Calu3 (cell line): ENCODE measurements at regions of chr12 and their contacts with region 1.

Region 1: DNA sequence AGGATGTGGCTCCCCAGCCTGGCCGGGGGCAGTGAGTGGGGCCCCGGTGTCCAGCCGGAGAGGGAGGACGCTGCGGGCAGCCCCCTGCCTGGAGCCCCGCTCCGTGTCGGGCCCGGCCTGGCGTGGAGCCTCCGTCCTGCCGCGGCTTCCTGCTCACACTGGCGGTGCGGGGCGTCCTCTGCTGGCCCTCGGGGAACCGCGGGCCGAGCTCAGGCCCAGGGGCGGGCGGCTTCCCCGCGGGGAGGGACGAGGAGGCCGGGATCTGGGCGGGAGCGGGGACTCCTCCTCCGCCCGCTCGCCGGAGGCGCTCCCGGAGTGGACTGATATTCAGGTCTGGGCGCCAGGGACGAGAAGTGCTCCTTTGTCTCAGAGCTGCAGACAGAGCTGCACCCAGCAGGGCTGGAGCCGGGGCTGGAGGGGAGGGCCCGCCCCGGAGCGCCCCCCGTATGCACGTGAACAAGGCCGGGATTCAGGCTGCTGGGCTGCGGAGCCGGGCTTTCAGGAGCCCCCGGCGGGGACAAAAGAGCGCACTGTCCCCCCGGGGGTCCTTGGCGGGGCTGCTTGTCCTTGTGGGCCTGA is 2.2 kb downstream of the MMP17 start:
- DNase-seq: peak; percentile 83
- H3K4me3 Mint-ChIP-seq: peak overlapping the region; percentile 68
- H3K27ac Mint-ChIP-seq: no peak overlapping the region
- H3K4me1 Mint-ChIP-seq: peaks cover 26% of the 10 kb centered on the region
- H3K27me3 Mint-ChIP-seq: peaks cover 84% of the 10 kb centered on the region
- CTCF ChIP-seq: peak; percentile 22

Region 2: DNA sequence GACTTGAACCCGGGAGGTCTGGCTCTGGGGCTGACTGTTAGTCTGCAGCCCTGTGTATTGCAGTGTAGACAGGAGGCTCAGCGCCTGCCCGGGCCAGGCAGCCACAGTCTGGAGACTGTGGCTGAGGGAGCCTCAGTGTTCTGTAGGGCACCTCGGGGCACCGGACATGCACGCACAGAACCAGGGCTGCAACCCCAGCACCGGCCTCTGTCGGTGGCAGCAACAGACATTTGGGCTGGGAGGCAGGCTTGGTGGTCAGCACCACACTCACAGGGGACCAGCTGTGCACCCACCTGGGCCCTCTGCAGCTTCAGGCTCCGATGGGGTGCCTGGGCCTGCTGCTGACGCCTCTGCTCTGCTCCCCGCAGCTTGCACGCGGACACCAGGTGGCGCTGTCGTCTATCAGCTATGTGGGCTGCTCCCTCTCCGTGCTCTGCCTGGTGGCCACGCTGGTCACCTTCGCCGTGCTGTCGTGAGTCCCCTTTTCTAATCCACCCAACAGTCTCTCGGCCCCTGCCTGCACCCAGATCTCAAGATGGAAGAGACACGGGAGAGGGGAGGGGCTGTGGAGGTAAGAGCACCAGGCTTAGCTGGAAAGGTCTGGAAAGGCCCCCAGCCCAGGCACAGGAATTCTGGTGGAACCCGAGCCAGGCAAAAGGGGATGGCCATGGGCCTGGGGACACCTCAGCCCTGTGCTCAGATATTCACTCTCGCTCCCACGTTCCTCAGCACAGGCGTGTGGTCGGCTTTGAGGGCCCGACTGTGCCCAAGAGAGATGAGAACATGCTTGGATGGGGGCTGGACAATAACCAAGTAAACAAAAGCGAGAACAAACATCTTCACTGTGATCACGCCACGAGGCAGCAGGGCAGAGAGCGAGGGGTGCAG is 725.7 kb before region 1 on chr12:
- CTCF ChIA-PET with region 1: interaction called, 8 read pairs
- intact Hi-C with region 1: loop called (anchors 10 kb)
- DNase-seq: peak; percentile 94
- H3K4me3 Mint-ChIP-seq: no peak overlapping the region
- H3K27ac Mint-ChIP-seq: no peak overlapping the region
- H3K4me1 Mint-ChIP-seq: no peaks in the 10 kb centered on the region
- H3K27me3 Mint-ChIP-seq: peaks cover 37% of the 10 kb centered on the region
- CTCF ChIP-seq: peak; percentile 92

Region 3: DNA sequence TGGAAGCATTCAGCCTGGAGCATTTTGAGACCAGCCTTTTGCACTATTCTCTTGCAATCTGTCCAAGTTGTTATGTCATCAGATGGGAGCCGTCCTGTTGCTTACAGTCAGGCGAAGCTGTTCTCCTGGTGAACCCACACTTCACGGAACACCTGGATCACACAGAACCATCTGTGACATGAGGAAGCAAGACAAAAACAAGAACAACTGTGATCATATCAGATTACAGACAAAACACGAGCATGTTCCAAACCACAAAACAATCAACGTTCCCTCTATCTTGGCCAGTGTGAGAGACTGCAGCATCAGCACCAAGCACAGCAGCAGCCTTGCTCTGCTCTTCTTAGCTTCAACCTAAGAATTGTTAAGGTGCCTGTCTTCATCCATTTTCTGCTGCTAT is 300.0 kb before region 1 on chr12:
- CTCF ChIA-PET with region 1: no interaction called
- intact Hi-C with region 1: no loop called
- DNase-seq: no peak
- H3K4me3 Mint-ChIP-seq: no peak overlapping the region
- H3K27ac Mint-ChIP-seq: no peak overlapping the region
- H3K4me1 Mint-ChIP-seq: no peaks in the 10 kb centered on the region
- H3K27me3 Mint-ChIP-seq: peaks cover 92% of the 10 kb centered on the region
- CTCF ChIP-seq: no peak

Region 4: DNA sequence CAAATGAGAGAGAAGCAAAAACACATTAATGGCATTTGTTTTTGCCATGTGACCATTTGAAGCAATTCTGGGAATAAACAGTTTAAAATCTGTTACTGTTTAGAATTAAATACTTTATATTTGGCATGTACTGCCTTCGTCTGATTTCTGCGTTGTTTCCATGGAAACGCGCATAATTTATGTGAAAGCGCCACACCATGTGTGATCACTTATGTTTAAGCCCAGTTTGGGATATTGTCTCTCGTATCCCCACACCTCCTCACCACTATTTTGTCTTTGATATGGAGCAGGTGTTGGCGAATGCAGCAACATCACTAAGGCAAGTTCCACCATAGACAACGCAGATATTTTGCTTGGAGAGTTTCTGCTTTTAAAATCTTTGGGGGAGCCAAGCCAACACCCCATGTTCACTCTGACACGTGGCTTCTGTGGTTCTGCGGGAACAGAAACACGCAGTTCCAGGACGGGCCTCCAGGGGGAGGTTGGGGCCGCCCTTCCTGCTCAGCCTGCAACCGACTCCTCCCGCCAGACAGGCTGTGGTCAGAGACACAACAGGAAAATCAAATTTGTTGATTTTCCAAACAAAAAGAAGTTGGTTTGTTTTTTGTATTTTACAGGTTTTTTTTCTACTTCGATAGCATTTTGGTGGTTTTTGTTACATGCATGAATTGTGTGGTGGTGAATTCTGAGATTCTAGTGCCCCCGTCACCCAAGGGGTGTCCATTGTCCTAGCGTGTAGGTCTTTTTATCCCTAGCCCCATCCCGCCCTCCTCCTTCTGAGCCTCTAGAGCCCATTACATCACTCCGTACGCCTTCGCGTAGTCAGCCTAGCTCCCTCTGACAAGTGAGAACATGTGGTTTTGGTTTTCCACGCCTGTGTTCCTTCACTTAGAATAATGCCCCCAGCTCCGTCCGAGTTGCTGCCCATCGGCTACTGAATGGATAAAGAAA is 221.4 kb before region 1 on chr12:
- CTCF ChIA-PET with region 1: no interaction called
- intact Hi-C with region 1: loop called (anchors 10 kb)
- DNase-seq: peak; percentile 82
- H3K4me3 Mint-ChIP-seq: no peak overlapping the region
- H3K27ac Mint-ChIP-seq: no peak overlapping the region
- H3K4me1 Mint-ChIP-seq: no peaks in the 10 kb centered on the region
- H3K27me3 Mint-ChIP-seq: peaks cover 100% of the 10 kb centered on the region
- CTCF ChIP-seq: peak; percentile 88

Region 5: GRCh38 chr12:131793243-131794022 is 37.0 kb before region 1 on chr12:
- CTCF ChIA-PET with region 1: no interaction called
- intact Hi-C with region 1: no loop called
- DNase-seq: no peak
- H3K4me3 Mint-ChIP-seq: no peak overlapping the region
- H3K27ac Mint-ChIP-seq: no peak overlapping the region
- H3K4me1 Mint-ChIP-seq: no peaks in the 10 kb centered on the region
- H3K27me3 Mint-ChIP-seq: no peaks in the 10 kb centered on the region
- CTCF ChIP-seq: no peak